Activated B cell treated with CpG ODN at 0.5 μM for 24 hours (primary cell): ENCODE measurements at regions of chr9 and their contacts with region 1.

Region 1: GRCh38 chr9:35071814-35072460 is 488 bp downstream of the VCP start:
- DNase-seq: peak; percentile 80
- ATAC-seq: peak; percentile 63
- H3K4me3 Mint-ChIP-seq: peak overlapping the region; percentile 89
- H3K27ac Mint-ChIP-seq: peak overlapping the region; percentile 93
- H3K4me1 Mint-ChIP-seq: peaks cover 51% of the 10 kb centered on the region
- H3K27me3 Mint-ChIP-seq: no peaks in the 10 kb centered on the region
- CTCF ChIP-seq: no peak

Region 2: DNA sequence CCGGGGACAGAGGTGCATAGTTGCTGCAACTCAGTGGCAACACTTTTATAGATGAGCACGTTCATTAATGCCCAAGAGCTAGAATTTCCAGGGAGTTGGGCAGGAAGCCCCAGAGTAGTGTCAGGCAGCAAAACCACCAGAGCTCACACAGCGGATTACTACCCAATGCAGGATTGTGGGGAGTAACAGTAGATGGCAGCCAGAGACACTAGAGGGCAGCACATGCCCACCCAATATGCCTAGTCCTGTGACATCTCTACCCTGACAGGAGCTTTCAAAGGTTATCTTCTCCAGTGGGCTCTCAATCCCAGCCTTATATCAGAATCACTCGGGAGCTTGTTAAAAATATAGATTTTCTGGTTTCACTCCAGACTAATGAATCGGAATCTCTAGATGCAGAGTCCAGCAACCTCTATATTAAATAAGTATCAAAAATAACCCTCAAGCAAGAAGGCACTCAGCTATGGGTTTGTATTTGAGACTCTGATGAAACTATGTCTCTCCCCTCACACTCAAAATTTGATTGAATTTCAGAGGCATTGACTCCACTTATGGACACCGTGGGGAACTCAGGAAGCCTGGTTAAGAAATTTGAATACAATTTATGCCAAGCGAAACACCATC is 172.3 kb before region 1 on chr9:
- CTCF ChIA-PET with region 1: interaction called, 12 read pairs
- POLR2A ChIA-PET with region 1: interaction called, 3 read pairs
- intact Hi-C with region 1: no loop called
- DNase-seq: peak; percentile 66
- ATAC-seq: peak; percentile 99
- H3K4me3 Mint-ChIP-seq: no peak overlapping the region
- H3K27ac Mint-ChIP-seq: no peak overlapping the region
- H3K4me1 Mint-ChIP-seq: no peaks in the 10 kb centered on the region
- H3K27me3 Mint-ChIP-seq: peaks cover 22% of the 10 kb centered on the region
- CTCF ChIP-seq: peak; percentile 22

Region 3: GRCh38 chr9:35051069-35051967 is 20.6 kb before region 1 on chr9:
- CTCF ChIA-PET with region 1: interaction called, 10 read pairs
- POLR2A ChIA-PET with region 1: interaction called, 11 read pairs
- intact Hi-C with region 1: no loop called
- DNase-seq: no peak
- ATAC-seq: peak; percentile 71
- H3K4me3 Mint-ChIP-seq: no peak overlapping the region
- H3K27ac Mint-ChIP-seq: no peak overlapping the region
- H3K4me1 Mint-ChIP-seq: peaks cover 5% of the 10 kb centered on the region
- H3K27me3 Mint-ChIP-seq: no peaks in the 10 kb centered on the region
- CTCF ChIP-seq: no peak

Region 4: DNA sequence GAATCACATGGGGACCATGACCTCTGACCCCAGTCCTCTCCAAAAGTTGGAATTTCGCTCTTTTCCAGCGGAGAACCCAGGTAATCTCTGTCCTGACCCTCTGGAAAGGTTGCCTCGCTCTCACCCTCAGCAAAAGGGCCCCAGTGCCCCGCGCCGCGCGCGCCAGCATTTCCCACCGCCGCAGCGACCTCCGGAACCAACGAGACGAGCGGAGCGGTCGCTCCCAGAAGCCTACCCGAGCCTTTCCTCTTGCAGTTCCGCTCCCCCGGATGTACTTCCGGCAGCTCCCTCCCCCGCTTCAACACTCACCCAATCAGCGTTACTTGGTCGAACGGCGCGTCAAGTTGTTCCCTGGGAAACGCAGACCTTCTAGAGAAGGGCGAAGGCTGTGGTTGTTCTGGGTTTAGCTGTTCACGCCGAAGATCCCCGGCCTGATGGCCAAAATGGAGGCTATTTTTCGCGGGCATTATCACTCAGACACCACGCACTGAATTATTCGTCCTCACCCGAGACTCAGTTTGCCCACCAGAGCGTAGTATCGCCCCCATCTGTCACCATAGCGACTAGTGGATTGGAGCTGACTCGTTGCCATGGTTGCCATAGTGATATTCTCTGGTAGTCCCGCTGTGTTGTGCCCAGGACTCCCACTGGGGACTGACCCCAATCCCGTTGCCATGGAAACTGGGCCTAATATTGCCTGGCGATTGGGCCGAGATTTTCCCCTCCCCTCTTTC is 31.2 kb after region 1 on chr9 and contains the start of gene STOML2:
- CTCF ChIA-PET with region 1: interaction called, 3 read pairs
- POLR2A ChIA-PET with region 1: interaction called, 30 read pairs
- intact Hi-C with region 1: loop called (anchors 1 kb)
- DNase-seq: peak; percentile 82
- ATAC-seq: peak; percentile 97
- H3K4me3 Mint-ChIP-seq: peak within 1 kb of the TSS; percentile 97
- H3K27ac Mint-ChIP-seq: peak within 1 kb of the TSS; percentile 97
- H3K4me1 Mint-ChIP-seq: peaks cover 25% of the 10 kb centered on the region
- H3K27me3 Mint-ChIP-seq: no peaks in the 10 kb centered on the region
- CTCF ChIP-seq: no peak
- total RNA-seq, gene STOML2: 108 and 113 TPM in 2 replicates

Region 5: GRCh38 chr9:35616681-35617459 is 544.9 kb after region 1 on chr9:
- CTCF ChIA-PET with region 1: no interaction called
- POLR2A ChIA-PET with region 1: no interaction called
- intact Hi-C with region 1: loop called (anchors 1 kb)
- DNase-seq: peak; percentile 64
- ATAC-seq: peak; percentile 8
- H3K4me3 Mint-ChIP-seq: peak overlapping the region; percentile 87
- H3K27ac Mint-ChIP-seq: peak overlapping the region; percentile 97
- H3K4me1 Mint-ChIP-seq: peaks cover 98% of the 10 kb centered on the region
- H3K27me3 Mint-ChIP-seq: no peaks in the 10 kb centered on the region
- CTCF ChIP-seq: no peak